ENCODE measurements at regions of chr6 and their contacts with region 1.

Region 1: DNA sequence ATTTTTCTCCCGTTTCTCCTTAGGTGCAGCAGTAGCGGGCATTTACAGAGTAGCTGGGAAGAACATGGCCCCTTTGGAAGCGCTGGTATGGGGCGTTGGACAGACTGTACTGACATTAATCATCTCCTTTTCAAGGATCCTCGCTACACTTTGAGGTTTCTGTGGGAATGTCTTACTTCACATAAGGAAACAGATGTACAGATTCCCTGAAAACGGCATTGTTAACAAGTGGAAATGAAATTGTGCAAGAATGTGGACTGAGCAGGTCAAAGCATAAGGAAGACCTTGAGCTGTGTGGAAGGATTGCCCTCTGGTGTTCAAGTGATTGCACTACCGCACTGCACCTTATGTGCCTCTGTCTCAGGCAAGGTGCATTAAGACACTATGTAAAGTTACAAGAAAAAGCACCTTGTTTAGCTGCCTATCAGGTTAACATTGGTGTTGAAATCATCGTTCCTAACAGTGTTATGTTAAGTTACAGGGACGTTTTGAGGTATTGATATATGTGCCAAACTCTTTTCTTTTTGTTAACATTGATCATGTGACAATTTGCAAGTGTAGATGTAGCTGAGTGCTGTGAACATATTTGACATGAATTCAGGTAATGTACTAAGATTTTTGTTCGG is 38.0 kb downstream of the TMEM170B start:
- DNase-seq: peak; percentile 63
- H3K4me3 ChIP-seq: no peak overlapping the region
- H3K27ac ChIP-seq: no peak overlapping the region
- H3K4me1 ChIP-seq: no peaks in the 10 kb centered on the region
- H3K27me3 ChIP-seq: no peaks in the 10 kb centered on the region
- CTCF ChIP-seq: peak; percentile 77

Region 2: GRCh38 chr6:10954590-10955010 is 620.9 kb before region 1 on chr6:
- intact Hi-C with region 1: loop called (anchors 5 kb)
- DNase-seq: peak; percentile 74
- H3K4me3 ChIP-seq: no peak overlapping the region
- H3K27ac ChIP-seq: no peak overlapping the region
- H3K4me1 ChIP-seq: no peaks in the 10 kb centered on the region
- H3K27me3 ChIP-seq: no peaks in the 10 kb centered on the region
- CTCF ChIP-seq: peak; percentile 69

Region 3: DNA sequence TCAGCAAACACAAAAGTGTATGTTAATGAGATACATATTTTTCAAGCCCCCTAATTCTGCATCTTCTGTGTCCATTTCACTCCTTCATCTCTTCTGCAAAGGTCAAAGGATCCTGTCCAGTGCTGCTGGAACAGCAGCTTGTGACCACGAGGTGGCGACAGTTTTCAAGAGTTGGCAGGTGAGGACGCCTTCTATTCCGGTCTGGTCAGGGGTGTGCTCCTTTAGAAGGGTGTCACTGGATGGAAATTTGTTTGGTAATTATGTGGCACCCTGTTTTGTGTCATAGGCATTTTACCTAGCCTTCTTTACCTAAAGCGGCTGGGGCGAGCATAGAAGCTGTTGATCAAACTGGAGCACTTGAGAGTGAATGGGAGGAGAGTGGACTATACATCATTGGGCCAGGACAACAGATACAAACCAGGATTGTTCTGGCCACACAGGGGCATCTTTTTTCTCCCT is 431.1 kb before region 1 on chr6:
- intact Hi-C with region 1: loop called (anchors 5 kb)
- DNase-seq: peak; percentile 85
- H3K4me3 ChIP-seq: no peak overlapping the region
- H3K27ac ChIP-seq: no peak overlapping the region
- H3K4me1 ChIP-seq: no peaks in the 10 kb centered on the region
- H3K27me3 ChIP-seq: no peaks in the 10 kb centered on the region
- CTCF ChIP-seq: peak; percentile 88

Region 4: DNA sequence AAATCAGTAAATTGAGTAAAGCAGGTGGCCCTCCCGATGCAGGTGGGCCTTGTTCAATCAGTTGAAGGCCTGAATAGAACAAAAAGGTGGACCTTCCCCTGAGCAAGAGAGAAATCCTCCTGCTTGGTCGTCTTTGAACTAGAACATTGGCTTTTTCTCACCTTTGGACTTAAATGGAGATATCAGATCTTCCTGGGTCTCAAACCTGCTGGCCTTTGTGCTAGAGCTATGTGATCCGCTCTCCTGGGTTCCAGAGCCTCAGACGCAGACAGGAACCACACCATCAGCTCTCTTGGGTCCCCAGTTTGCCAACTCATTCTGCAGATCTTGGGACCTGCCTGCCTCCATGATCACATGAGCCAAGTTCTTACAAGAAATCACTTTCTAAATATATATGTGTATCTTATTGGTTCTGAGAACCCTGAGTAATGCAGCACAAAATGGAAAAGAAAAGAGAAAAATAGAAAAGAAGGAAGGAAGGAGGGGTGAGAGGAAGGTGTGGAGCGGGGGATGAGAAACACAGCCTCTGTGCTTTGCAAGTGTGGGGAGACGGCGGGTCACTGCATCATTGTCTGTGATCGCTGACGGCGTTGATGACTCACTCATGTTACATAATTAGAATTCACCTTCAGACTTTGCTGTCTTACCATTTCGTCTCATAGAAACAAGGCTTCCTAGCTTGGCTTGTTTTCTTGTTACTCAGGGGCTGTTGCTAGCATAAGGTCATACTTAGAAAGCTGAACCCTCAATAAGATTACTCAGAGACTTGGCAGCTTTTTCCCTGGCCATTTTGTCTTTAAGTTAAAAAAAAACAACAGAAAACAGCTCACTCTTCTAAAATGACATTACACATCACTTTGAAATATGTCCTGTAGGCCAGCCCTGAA is 257.4 kb before region 1 on chr6:
- intact Hi-C with region 1: no loop called
- DNase-seq: peak; percentile 72
- H3K4me3 ChIP-seq: no peak overlapping the region
- H3K27ac ChIP-seq: peak overlapping the region; percentile 31
- H3K4me1 ChIP-seq: no peaks in the 10 kb centered on the region
- H3K27me3 ChIP-seq: no peaks in the 10 kb centered on the region
- CTCF ChIP-seq: no peak

Region 5: DNA sequence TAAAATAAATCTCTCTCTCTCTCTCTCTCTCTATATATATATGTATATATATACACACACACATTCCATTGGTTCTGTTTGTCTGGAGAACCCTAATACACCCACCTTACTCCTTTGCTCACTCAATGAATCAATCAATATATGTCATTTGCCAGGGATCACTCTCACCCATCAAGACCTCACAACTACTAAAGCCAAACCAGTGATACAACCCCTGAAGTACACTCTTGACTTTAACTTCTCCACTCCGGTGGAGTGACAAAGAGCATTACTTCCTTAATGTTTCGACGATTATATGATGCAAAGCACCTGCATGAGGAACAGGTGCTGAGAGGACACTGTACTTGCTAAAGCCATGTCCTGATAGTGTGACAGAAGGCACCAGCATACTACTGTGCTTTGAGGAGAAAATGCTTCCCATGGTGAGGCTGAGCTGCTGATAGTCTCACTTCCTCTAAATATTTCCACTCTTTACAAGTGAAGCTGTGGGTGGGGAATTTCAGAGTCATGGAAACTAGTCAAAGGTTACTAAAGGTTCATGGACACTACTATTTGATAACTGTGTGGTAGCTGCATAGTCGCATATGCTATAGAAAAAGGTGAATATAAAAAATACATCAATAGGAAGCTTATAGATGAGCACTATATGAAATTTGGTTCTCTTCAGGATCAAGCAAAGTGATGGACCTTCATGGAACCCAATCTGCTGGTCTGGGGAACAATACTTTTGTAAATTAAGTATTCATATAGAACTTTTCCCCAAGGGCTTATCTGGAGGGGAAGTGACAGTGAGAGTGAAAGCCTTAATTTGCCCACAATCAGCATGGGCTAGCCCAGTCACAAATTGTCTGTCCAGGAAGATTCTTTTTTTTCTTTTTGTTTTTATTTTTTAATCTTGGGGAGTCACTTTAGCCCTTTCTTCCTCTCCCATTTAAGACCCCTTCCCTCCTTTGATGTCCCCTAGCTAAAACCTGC is 201.2 kb before region 1 on chr6:
- intact Hi-C with region 1: no loop called
- DNase-seq: no peak
- H3K4me3 ChIP-seq: no peak overlapping the region
- H3K27ac ChIP-seq: no peak overlapping the region
- H3K4me1 ChIP-seq: no peaks in the 10 kb centered on the region
- H3K27me3 ChIP-seq: no peaks in the 10 kb centered on the region
- CTCF ChIP-seq: no peak

Region 6: GRCh38 chr6:11732036-11732631 is 156.6 kb after region 1 on chr6:
- intact Hi-C with region 1: no loop called
- DNase-seq: no peak
- H3K4me3 ChIP-seq: no peak overlapping the region
- H3K27ac ChIP-seq: no peak overlapping the region
- H3K4me1 ChIP-seq: no peaks in the 10 kb centered on the region
- H3K27me3 ChIP-seq: no peaks in the 10 kb centered on the region
- CTCF ChIP-seq: no peak